ENCODE measurements at regions of chr4 and their contacts with region 1.

Region 1: DNA sequence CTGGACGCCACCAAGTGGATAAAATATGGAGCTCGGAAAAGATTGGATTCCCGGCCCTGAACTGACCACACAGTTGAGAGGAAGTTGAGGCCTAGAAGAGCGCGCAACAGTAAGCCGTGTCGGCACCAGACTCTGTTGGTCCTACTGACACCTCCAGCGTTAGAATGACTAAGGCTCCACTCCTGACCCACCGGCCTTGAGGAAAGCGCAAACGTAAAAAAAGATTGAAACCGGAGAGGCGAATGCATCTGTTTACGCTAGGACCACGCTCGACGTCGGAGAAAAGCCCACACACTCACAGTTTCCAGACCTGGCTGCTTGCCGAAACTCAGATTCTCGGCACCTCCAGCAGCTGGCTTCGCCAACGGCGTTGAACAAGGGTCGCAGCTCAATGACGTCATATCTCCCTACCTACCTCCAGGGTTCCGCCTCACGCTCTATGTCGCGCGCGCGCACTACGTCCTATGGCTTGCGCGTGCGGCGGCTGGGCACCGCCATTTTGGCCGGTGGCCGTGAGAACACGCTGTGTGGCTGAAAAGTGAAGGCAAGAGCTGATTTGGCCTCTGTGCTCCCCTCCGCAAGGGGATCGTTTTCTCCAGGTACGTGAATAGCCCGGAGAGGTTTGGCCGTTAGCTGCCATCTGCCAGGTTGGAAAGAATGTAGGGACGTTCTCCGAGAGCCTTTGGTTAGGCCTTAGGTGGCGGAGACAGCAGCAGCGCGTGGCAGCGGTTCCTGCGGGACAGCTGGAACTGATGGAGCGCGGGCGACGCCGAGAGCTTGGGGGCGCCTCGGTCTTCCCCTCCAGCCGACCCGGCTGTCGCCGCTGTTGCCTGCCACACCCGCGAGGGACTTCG is at the starts of genes ABCE1 and ANAPC10:
- H3K4me3 Mint-ChIP-seq: peak within 1 kb of the TSS; percentile 93
- H3K27ac Mint-ChIP-seq: peak within 1 kb of the TSS; percentile 99
- H3K4me1 Mint-ChIP-seq: peaks cover 25% of the 10 kb centered on the region
- H3K27me3 Mint-ChIP-seq: no peaks in the 10 kb centered on the region

Region 2: DNA sequence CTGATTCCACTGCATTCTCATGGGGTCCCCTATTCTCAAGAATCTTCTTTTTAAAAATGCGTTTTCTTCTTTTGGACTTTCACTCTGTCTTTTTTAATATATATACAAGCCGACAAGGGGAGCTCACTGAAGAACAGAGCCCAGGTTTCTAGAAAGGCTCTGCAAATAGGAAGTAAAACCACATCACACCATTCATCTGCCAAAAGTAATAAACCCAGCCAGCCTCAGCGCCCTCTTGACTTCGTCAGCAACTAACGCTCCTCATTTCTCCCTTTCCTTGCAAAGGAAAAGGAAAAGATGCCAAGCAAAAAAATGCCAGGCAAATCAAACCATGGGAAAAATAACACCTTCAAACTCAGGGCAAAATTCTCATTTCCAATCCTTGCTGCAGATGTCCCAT is 315.7 kb before region 1 on chr4:
- intact Hi-C with region 1: no loop called
- H3K4me3 Mint-ChIP-seq: no peak overlapping the region
- H3K27ac Mint-ChIP-seq: no peak overlapping the region
- H3K4me1 Mint-ChIP-seq: peaks cover 5% of the 10 kb centered on the region
- H3K27me3 Mint-ChIP-seq: no peaks in the 10 kb centered on the region

Region 3: DNA sequence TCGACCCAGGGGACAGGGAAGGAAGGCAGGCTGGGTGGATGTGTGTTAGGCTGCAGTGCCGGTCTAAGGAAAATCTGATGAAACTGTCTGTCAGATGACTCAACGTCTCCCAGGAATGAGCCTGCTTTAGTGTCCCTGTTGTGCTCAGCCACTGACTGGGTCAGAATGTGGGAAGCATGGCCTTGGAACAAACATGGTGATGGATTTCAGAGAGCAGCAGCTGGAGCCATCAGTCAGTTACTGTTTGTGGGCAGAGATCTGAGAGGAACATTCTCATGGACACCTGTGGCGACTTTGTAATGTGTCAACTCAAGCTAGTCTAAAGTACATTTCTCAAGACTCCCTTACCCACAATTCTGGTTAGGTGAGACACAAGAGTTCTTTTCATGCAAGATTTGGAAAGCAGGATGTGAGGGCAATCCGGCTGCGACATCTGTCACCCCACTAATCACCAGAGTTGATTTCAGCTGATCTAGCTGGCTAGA is 63.3 kb before region 1 on chr4:
- intact Hi-C with region 1: no loop called
- H3K4me3 Mint-ChIP-seq: no peak overlapping the region
- H3K27ac Mint-ChIP-seq: peak overlapping the region; percentile 66
- H3K4me1 Mint-ChIP-seq: peaks cover 45% of the 10 kb centered on the region
- H3K27me3 Mint-ChIP-seq: no peaks in the 10 kb centered on the region

Region 4: GRCh38 chr4:145083891-145084605 is 14.0 kb before region 1 on chr4:
- intact Hi-C with region 1: no loop called
- H3K4me3 Mint-ChIP-seq: no peak overlapping the region
- H3K27ac Mint-ChIP-seq: no peak overlapping the region
- H3K4me1 Mint-ChIP-seq: peaks cover 13% of the 10 kb centered on the region
- H3K27me3 Mint-ChIP-seq: no peaks in the 10 kb centered on the region

Region 5: GRCh38 chr4:145180298-145181090 is 82.4 kb after region 1 on chr4 and contains the start of gene OTUD4:
- intact Hi-C with region 1: loop called (anchors 1 kb)
- H3K4me3 Mint-ChIP-seq: peak within 1 kb of the TSS; percentile 80
- H3K27ac Mint-ChIP-seq: peak within 1 kb of the TSS; percentile 89
- H3K4me1 Mint-ChIP-seq: peaks cover 28% of the 10 kb centered on the region
- H3K27me3 Mint-ChIP-seq: peaks cover 13% of the 10 kb centered on the region

Region 6: DNA sequence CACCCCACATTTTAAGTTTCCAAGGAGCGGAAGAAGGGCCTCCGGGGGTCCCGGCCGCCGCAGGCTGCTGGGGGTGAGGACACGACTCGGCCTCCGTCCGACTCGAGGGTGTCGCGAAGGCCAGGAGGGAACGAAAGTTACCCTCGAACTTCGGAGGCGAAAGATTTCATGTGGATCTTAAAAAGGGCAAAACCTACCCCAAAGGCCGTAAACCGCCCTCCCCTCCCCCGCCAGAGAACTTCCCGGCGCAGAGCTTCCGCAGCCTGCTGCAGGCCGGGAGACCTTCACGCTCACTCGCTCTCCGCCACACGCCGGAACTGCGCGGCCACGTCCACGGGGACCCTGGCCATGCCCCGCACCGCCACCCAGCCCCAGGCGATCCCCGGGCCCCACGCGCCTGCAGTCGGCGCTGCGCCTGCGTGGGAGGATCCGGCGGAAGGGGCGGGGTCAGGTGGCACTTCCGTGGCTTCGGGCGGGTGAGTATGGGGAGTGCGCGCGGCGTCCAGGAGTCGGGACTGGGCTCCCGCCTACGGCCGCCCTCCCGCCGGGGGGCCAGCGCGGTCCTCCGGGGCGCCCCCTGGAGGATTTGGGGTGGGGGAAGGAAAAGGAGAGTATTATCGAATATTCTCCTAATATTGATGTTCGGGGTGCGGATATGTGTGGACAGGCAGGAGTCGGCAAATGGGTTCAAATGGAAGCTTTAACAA is 521.0 kb after region 1 on chr4 and contains the start of gene MMAA:
- intact Hi-C with region 1: loop called (anchors 2 kb)
- H3K4me3 Mint-ChIP-seq: peak within 1 kb of the TSS; percentile 97
- H3K27ac Mint-ChIP-seq: peak within 1 kb of the TSS; percentile 99
- H3K4me1 Mint-ChIP-seq: peaks cover 21% of the 10 kb centered on the region
- H3K27me3 Mint-ChIP-seq: no peaks in the 10 kb centered on the region